ENCODE measurements at regions of chr11 and their contacts with region 1.

Region 1: DNA sequence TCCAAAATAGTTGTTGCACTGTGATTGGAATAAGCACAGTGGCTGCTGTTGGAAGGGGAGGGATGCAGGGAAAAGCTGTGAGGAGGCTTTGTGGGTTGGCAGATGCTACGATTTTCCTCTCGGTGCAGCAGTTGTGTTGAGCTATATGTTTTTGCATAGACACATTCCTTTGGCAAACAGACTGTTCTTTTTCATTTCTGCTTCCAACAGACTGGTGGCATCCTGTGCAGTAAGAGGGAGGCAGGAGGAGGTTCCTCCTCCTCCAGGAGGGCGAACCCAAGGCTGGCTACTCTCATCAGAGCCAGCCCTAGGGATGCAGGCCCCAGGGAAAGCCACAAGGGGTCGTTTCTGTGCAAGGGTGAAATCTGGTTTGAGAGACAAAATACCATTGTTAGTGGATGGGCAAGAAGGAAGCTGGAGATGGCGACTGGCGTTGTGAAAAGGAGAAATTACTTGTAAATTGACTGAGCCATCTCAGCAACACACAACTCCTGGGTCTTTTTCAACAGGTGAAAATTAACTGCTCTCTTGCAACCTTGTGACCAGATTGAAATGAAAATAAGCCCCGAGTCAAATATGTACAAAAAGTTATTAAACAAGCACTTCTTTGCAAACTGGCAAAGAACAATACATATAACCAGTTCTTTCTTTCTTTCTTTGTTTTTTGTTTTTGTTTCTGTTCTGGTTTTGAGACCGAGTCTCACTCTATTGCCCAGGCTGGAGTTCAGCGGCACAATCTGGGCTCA is 26.5 kb upstream of the UBASH3B start:
- H3K4me3 ChIP-seq: no peak overlapping the region
- H3K27ac ChIP-seq: no peak overlapping the region
- H3K4me1 ChIP-seq: no peaks in the 10 kb centered on the region
- CTCF ChIP-seq: peak; percentile 47; the same call in 1 of the 2 replicates

Region 2: DNA sequence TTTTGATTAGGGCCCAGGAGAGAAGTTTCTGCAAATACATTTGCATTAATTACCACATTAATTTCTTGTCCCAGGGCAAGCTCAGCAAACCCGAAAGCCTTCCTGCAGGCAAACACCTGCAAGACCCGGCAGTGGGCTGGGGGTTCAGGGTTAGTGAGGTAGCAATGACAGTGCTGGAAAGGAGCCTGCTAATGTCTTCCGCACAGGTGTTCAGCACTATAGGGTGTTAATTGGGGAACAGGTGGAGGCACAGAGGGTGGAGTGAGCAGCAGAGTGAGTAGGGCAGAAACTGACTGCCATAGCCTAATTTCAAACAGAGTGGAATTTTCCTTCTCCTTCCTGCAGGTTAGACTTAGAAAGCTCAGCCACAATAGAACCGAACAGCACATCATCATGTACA is 24.4 kb before region 1 on chr11:
- CTCF ChIA-PET with region 1: interaction called, 14 read pairs
- POLR2A ChIA-PET with region 1: no interaction called
- H3K4me3 ChIP-seq: no peak overlapping the region
- H3K27ac ChIP-seq: no peak overlapping the region
- H3K4me1 ChIP-seq: no peaks in the 10 kb centered on the region
- CTCF ChIP-seq: no peak

Region 3: GRCh38 chr11:122754553-122755322 is 125.8 kb after region 1 on chr11:
- CTCF ChIA-PET with region 1: interaction called, 41 read pairs
- POLR2A ChIA-PET with region 1: no interaction called
- H3K4me3 ChIP-seq: no peak overlapping the region
- H3K27ac ChIP-seq: no peak overlapping the region
- H3K4me1 ChIP-seq: no peaks in the 10 kb centered on the region
- CTCF ChIP-seq: no peak

Region 4: DNA sequence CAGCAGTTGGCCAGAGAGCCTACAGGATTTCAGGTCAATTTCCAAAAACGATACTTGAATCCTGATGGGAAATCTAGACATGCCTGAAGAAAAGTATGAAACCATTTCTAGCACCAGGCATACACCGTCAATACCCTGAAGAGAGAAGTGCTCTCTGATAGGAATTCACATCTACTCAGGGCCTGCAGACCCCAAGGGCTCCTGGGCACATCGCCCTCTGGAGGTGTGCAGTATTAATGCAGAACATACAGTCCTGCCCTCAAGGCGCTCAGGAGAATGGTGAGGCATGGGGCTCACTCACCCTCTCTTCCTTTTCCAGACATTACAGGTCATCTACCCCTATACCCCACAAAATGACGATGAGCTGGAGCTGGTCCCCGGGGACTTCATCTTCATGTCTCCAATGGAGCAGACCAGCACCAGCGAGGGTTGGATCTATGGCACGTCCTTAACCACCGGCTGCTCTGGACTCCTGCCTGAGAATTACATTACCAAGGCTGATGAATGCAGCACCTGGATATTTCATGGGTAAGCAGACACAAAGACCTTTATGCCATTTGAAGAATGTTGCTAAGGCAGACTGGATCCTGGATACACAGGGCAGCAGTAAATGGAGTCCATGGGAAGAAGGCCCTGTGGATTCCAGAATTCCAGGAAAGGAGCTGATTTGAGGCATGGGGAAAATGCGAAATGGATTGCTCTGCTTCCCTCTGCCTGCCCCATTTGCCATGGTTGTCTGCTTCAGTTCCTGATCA is 160.0 kb after region 1 on chr11:
- CTCF ChIA-PET with region 1: interaction called, 171 read pairs
- POLR2A ChIA-PET with region 1: no interaction called
- H3K4me3 ChIP-seq: no peak overlapping the region
- H3K27ac ChIP-seq: no peak overlapping the region
- H3K4me1 ChIP-seq: no peaks in the 10 kb centered on the region
- CTCF ChIP-seq: no peak

Region 5: DNA sequence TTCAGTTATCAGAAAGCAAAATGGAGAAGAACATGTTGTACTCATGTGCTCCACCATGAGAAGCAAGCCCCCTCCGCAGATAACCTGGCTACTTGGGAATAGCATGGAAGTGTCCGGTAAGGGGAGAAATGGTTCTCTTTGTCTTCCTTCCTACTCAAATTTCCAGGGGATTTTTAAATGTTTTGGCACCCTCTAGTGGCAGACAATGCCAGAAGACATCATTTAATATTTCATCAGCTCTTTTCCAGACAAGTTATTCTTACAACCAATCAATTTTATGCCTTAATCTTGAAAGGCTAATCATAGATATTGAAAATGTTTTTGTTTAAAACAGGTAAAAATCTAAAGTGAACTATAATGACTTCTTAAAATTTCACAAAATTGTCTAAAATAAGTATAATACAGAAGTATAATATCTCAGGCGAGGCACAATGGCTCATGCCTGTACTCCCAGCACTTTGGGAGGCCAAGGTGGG is 225.0 kb after region 1 on chr11:
- CTCF ChIA-PET with region 1: interaction called, 35 read pairs
- POLR2A ChIA-PET with region 1: no interaction called
- H3K4me3 ChIP-seq: no peak overlapping the region
- H3K27ac ChIP-seq: no peak overlapping the region
- H3K4me1 ChIP-seq: 0 out of 2 replicates have a peak, but pooled peaks cover 3% of the 10 kb centered on the region
- CTCF ChIP-seq: peak; percentile 27; the same call in 1 of the 2 replicates

Measured in HEK293 (cell line).